ENCODE measurements at regions of chr16 and their contacts with region 1.

Region 1: DNA sequence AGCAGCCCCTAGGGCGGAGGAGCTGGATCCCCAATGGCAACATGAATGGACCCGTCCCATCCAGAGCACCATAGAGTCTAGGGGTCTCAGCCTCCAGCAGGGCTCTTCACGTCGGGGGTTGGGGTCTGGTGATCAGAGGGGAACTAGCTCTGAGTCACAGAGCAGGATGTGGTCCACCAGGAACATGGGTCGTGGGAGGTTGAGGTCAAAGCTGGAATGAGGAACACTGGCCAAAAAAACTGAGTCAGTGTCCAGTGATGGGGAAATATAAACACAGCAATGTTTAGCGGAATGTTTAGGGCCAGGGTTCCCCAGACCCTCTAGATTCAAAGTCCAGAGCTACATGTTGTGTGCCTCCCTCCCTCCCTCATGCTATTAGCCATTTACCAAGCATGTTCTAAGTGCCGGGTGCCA is 79.1 kb upstream of the C16orf82 start:
- DNase-seq: no peak
- ATAC-seq: no peak
- H3K4me3 Mint-ChIP-seq: no peak overlapping the region
- H3K27ac Mint-ChIP-seq: peak overlapping the region; percentile 99; the same call in 1 of the 2 replicates
- H3K4me1 Mint-ChIP-seq: peaks cover 49% of the 10 kb centered on the region
- H3K27me3 Mint-ChIP-seq: peaks cover 6% of the 10 kb centered on the region; the same call in 1 of the 2 replicates
- CTCF ChIP-seq: no peak

Region 2: DNA sequence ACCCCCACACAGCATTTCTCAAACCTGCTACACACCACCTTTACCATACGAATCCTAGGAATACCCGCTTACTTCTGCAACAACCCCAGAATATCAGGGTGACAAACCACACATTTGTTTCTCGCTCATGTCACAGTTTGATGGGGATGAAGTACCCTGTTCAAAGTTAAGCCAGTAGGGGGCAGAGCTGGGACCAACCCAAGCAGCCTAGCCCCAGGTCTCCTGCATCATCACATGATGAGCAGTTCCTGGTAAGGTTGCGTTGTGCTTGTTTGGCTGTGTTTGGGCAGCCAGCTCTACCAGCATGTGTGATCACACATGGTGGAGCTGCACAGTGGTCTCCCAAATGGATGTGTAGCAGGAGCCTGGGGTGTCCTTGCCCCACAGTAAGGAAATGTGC is 24.5 kb before region 1 on chr16:
- CTCF ChIA-PET with region 1: interaction called, 11 read pairs
- POLR2A ChIA-PET with region 1: no interaction called
- DNase-seq: peak; percentile 63
- ATAC-seq: peak; percentile 99
- H3K4me3 Mint-ChIP-seq: no peak overlapping the region
- H3K27ac Mint-ChIP-seq: no peak overlapping the region
- H3K4me1 Mint-ChIP-seq: peaks cover 2% of the 10 kb centered on the region
- H3K27me3 Mint-ChIP-seq: peaks cover 4% of the 10 kb centered on the region
- CTCF ChIP-seq: peak; percentile 50

Region 3: DNA sequence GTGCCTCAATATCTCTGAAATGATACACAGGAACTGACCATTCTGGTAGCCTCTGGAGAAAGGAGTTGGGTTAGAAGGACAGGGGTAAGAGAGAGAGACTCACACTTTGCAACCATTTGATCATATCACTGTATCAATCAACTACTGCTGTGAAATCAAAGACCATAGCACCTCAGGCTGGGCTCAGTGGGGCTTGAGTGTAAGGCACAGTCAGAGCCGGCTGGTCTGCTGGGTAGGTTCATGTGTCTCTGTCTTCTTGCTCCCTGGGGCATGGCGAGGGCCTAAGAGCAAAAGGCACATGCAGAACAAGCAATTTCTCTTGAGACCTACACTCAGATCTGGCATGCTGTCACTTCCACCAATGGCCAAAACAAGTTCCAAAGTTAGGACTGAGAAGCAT is 32.4 kb after region 1 on chr16:
- CTCF ChIA-PET with region 1: no interaction called
- POLR2A ChIA-PET with region 1: no interaction called
- DNase-seq: no peak
- ATAC-seq: no peak
- H3K4me3 Mint-ChIP-seq: no peak overlapping the region
- H3K27ac Mint-ChIP-seq: no peak overlapping the region
- H3K4me1 Mint-ChIP-seq: peaks cover 10% of the 10 kb centered on the region; the same call in 1 of the 2 replicates
- H3K27me3 Mint-ChIP-seq: 0 out of 2 replicates have a peak, but pooled peaks cover 2% of the 10 kb centered on the region
- CTCF ChIP-seq: no peak

Measured in WTC11 (cell line).